Mammary epithelial cell (primary cell): ENCODE measurements at regions of chr3 and their contacts with region 1.

Region 1: GRCh38 chr3:79521238-79521848 is 246.5 kb downstream of the ROBO1 start:
- DNase-seq: peak; percentile 24
- H3K4me3 ChIP-seq: no peak overlapping the region
- H3K27ac ChIP-seq: no peak overlapping the region
- H3K4me1 ChIP-seq: no peaks in the 10 kb centered on the region
- H3K27me3 ChIP-seq: no peaks in the 10 kb centered on the region
- CTCF ChIP-seq: peak; percentile 56

Region 2: GRCh38 chr3:79632842-79633241 is 111.5 kb after region 1 on chr3:
- CTCF ChIA-PET with region 1: no interaction called
- dilution Hi-C with region 1: no loop called
- in situ Hi-C with region 1: no loop called
- intact Hi-C with region 1: no loop called
- DNase-seq: peak; percentile 8
- H3K4me3 ChIP-seq: no peak overlapping the region
- H3K27ac ChIP-seq: no peak overlapping the region
- H3K4me1 ChIP-seq: no peaks in the 10 kb centered on the region
- H3K27me3 ChIP-seq: no peaks in the 10 kb centered on the region
- CTCF ChIP-seq: no peak

Region 3: DNA sequence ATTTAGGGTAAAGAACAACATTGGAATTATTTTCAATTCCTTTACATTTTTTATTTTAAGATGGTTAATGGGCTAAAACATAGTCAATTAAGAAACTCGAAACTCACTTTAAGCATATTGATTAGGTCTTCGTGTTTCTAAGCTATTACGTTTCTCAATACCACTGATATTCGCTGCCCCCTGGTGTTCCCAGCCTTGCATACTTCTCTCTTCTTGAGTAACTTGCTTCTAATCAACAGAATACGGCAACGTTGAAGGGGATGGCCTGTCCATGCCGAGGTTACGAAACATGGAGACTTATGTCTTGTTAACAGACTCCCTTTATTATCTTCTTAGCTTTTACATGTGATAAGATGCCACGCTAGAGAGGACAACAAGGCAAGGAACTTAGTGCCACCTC is 202.9 kb after region 1 on chr3:
- CTCF ChIA-PET with region 1: interaction called, 4 read pairs
- dilution Hi-C with region 1: no loop called
- in situ Hi-C with region 1: no loop called
- intact Hi-C with region 1: loop called (anchors 5 kb)
- DNase-seq: no peak
- H3K4me3 ChIP-seq: no peak overlapping the region
- H3K27ac ChIP-seq: no peak overlapping the region
- H3K4me1 ChIP-seq: no peaks in the 10 kb centered on the region
- H3K27me3 ChIP-seq: no peaks in the 10 kb centered on the region
- CTCF ChIP-seq: peak in 1 of 2 donors; percentile 10

Region 4: GRCh38 chr3:80688814-80689213 is 1167.5 kb after region 1 on chr3:
- CTCF ChIA-PET with region 1: no interaction called
- dilution Hi-C with region 1: no loop called
- in situ Hi-C with region 1: loop called in 1 of 2 experiments (anchors 10 kb)
- intact Hi-C with region 1: loop called (anchors 1 kb)
- DNase-seq: no peak
- H3K4me3 ChIP-seq: no peak overlapping the region
- H3K27ac ChIP-seq: no peak overlapping the region
- H3K4me1 ChIP-seq: no peaks in the 10 kb centered on the region
- H3K27me3 ChIP-seq: no peaks in the 10 kb centered on the region
- CTCF ChIP-seq: peak in 1 of 2 donors; percentile 42

Region 5: GRCh38 chr3:80696281-80696680 is 1174.9 kb after region 1 on chr3:
- CTCF ChIA-PET with region 1: no interaction called
- dilution Hi-C with region 1: no loop called
- in situ Hi-C with region 1: loop called in 1 of 2 experiments (anchors 10 kb)
- intact Hi-C with region 1: no loop called
- DNase-seq: peak; percentile 1
- H3K4me3 ChIP-seq: no peak overlapping the region
- H3K27ac ChIP-seq: no peak overlapping the region
- H3K4me1 ChIP-seq: no peaks in the 10 kb centered on the region
- H3K27me3 ChIP-seq: no peaks in the 10 kb centered on the region
- CTCF ChIP-seq: no peak

Region 6: GRCh38 chr3:81242871-81243270 is 1721.5 kb after region 1 on chr3:
- CTCF ChIA-PET with region 1: no interaction called
- dilution Hi-C with region 1: no loop called
- in situ Hi-C with region 1: loop called in 1 of 2 experiments (anchors 25 kb)
- intact Hi-C with region 1: loop called (anchors 5 kb)
- DNase-seq: no peak
- H3K4me3 ChIP-seq: no peak overlapping the region
- H3K27ac ChIP-seq: no peak overlapping the region
- H3K4me1 ChIP-seq: no peaks in the 10 kb centered on the region
- H3K27me3 ChIP-seq: no peaks in the 10 kb centered on the region
- CTCF ChIP-seq: peak; percentile 43 to 57